HEK293T (cell line): ENCODE measurements at regions of chr1 and their contacts with region 1.

Region 1: DNA sequence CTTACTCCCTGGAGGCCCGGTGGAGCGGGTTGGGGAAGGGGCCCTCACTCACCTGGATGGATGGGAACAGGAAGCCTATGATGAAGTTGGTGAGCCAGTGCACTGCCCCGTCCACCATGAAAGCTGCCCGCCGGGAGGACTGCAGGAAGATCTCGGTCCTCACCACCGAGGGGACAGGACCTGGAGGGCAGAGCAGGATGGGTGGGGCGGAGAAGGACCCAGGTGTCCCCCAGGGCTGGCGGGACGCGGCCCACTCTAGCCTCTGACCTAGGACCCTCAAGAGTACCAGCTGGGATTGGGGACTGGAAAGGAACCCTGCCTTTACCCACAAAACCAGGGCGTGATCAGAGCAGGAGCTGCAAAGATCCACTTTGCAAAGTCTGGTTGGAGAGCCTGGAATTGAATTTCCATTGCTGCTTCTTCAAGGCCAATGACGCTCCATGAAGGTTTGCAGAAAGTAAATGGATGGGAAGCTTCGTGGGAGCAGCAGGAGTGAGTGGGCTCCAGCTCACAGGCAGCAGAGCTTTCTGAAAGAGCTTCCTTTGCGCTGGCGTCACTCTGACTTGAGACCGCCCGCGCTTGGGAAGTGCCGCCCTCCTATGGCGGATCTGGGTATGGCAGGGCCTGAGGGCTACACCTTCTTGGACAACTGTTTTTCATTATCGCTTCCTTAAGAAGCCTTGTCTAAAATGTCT is 21.4 kb downstream of the SLC2A7 start:
- DNase-seq: peak; percentile 89

Region 2: GRCh38 chr1:8913111-8913856 is 91.6 kb before region 1 on chr1:
- CTCF ChIA-PET with region 1: interaction called, 10 read pairs
- POLR2A ChIA-PET with region 1: no interaction called
- DNase-seq: no peak

Region 3: GRCh38 chr1:8962812-8963530 is 41.9 kb before region 1 on chr1:
- CTCF ChIA-PET with region 1: interaction called, 16 read pairs
- POLR2A ChIA-PET with region 1: interaction called, 3 read pairs
- DNase-seq: peak; percentile 76

Region 4: DNA sequence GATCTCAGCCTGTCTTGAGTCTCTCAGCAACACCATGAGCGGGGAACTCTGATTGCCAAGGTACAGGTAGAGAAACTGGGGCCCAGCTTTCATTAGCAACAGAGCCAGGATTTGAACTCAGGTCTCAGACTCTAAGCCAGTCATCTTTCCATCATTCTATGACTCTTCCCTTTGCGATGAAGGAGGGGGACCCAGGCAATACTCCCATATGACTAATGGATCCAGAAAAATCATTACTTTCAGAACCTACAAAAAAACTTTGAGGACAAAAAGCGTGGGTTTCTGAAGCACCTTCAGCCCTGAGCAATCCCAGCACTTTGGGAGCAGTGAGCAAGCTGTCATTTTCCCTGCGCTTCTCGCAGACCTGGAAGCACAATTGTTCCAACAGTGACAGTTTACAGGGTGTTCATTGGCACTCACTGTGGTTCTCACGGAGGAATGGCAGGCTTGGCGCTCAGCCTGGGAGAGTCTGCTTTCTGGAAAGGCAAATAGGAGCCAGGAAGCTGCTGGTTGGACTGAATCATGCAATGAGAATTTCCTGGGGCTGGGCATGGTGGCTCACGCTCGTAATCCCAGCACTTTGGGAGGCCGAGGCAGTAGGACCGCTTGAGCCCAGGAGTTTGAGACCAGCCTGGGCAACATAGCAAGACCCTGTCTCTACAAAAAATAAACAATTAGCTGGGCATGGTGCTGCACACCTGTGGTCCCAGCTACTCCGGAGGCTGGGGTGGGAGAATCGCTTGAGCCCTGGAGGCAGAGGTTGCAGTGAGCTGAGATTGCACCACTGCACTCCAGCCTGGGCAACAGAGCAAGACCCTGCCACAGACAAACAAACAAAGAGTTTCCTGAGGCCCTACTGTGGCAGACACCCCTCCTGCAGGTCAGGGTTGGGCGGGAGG is 18.7 kb before region 1 on chr1:
- CTCF ChIA-PET with region 1: interaction called, 11 read pairs
- POLR2A ChIA-PET with region 1: interaction called, 3 read pairs
- DNase-seq: no peak

Region 5: GRCh38 chr1:9018333-9018732 is 13.5 kb after region 1 on chr1:
- CTCF ChIA-PET with region 1: interaction called, 15 read pairs
- POLR2A ChIA-PET with region 1: no interaction called
- DNase-seq: no peak

Region 6: DNA sequence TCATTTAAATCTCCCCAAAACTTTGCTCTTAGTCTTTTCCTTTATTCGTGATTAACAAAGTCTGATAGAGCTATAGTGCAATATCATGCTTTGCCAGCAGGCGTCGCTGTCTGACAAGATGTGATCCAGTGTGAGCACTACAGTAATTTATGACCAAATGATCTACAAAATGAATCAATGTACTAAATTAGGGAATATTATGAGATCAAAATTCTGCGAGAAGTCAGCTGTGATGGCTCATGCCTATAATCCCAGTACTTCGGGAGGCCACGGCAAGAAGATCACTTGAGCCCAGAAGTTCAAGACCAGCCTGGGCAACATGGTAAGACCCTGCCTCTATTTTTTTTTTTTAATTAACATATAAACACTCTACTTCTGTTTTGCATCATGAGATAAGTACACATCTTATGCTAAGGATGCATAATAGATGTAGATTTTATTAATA is 284.3 kb after region 1 on chr1:
- CTCF ChIA-PET with region 1: no interaction called
- POLR2A ChIA-PET with region 1: no interaction called
- DNase-seq: peak; percentile 44